ENCODE measurements at regions of chr17 and their contacts with region 1.

Region 1: DNA sequence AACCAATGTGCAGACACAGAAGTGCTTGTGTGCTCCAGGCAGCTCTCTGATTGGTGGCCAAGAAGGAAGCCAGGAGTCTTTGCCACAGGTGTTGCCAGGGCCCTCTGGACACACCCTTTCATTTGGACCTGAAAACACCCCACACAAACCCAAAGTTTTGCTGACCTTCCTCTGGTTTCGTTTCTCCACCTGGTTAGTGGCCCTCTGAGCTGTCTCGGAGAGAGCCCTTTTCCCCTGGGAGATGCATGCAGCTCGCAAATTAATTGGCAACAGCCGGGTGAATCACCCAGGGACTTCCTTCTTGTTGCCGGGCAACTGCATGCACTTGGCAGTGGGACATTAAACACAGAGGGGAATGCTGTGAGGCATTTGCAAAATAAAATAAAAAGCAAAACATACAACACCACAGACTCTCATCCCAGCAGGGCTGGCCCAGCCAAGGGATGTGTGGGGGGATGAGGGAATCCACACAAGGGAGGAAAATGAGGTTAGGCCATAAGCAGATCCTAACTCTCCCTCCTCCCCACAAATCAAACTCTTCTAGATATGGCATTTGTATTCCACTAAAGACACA is 286.6 kb downstream of the SOX9 start:
- DNase-seq: peak in 9 of 10 donors; percentile 41 to 83 (median 68)
- H3K4me3 ChIP-seq: no peak overlapping the region
- H3K27ac ChIP-seq: peak overlapping the region in 54 of 59 donors; percentile 15 to 85 (median 69)
- H3K27me3 ChIP-seq: no peaks in the 10 kb centered on the region
- CTCF ChIP-seq: no peak

Region 2: GRCh38 chr17:72191921-72192799 is 215.3 kb before region 1 on chr17:
- intact Hi-C with region 1: no loop called
- DNase-seq: no peak
- H3K4me3 ChIP-seq: no peak overlapping the region
- H3K27ac ChIP-seq: peak overlapping the region in 3 of 59 donors; percentile 11 to 43 (median 36)
- H3K27me3 ChIP-seq: no peaks in the 10 kb centered on the region
- CTCF ChIP-seq: no peak

Region 3: GRCh38 chr17:72212041-72212440 is 195.4 kb before region 1 on chr17:
- intact Hi-C with region 1: no loop called
- DNase-seq: no peak
- H3K4me3 ChIP-seq: no peak overlapping the region
- H3K27ac ChIP-seq: no peak overlapping the region
- H3K27me3 ChIP-seq: no peaks in the 10 kb centered on the region
- CTCF ChIP-seq: no peak

Region 4: DNA sequence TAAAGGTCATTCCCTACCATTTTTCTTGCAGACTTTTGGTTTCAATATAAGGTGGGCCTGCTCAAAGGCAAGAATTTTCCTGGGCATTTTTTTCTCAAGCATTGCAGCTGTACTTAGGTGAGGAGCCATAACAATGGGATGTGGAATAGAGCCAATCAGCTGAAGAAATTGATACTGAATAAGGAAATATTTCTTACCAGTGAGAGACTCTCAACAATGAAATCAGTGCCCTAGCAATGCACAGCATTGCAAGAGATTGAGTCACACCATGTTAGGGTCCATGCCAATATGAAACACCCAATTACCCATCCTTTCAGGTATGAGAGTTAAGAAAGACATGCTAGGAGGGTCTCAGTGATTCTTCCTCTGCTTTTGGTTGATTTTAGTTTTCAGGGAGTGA is 49.0 kb before region 1 on chr17:
- intact Hi-C with region 1: loop called in 1 of 2 experiments (anchors 10 kb)
- DNase-seq: no peak
- H3K4me3 ChIP-seq: no peak overlapping the region
- H3K27ac ChIP-seq: no peak overlapping the region
- H3K27me3 ChIP-seq: peaks cover 0 to 3% (median 0%) of the 10 kb centered on the region in 45 donors
- CTCF ChIP-seq: no peak

Region 5: GRCh38 chr17:72445055-72445991 is 37.9 kb after region 1 on chr17:
- intact Hi-C with region 1: no loop called
- DNase-seq: peak in 4 of 10 donors; percentile 32 to 50 (median 42)
- H3K4me3 ChIP-seq: no peak overlapping the region
- H3K27ac ChIP-seq: peak overlapping the region in 29 of 59 donors; percentile 9 to 69 (median 35)
- H3K27me3 ChIP-seq: peaks cover 0 to 23% (median 0%) of the 10 kb centered on the region in 45 donors
- CTCF ChIP-seq: no peak

Region 6: GRCh38 chr17:72465191-72466024 is 58.0 kb after region 1 on chr17:
- intact Hi-C with region 1: loop called in 1 of 2 experiments (anchors 10 kb)
- DNase-seq: peak in 2 of 10 donors; percentile 26 to 66
- H3K4me3 ChIP-seq: no peak overlapping the region
- H3K27ac ChIP-seq: peak overlapping the region in 43 of 59 donors; percentile 5 to 87 (median 60)
- H3K27me3 ChIP-seq: peaks cover 0 to 24% (median 0%) of the 10 kb centered on the region in 45 donors
- CTCF ChIP-seq: no peak